RWPE1 (cell line): ENCODE measurements at regions of chr14 and their contacts with region 1.

Region 1: DNA sequence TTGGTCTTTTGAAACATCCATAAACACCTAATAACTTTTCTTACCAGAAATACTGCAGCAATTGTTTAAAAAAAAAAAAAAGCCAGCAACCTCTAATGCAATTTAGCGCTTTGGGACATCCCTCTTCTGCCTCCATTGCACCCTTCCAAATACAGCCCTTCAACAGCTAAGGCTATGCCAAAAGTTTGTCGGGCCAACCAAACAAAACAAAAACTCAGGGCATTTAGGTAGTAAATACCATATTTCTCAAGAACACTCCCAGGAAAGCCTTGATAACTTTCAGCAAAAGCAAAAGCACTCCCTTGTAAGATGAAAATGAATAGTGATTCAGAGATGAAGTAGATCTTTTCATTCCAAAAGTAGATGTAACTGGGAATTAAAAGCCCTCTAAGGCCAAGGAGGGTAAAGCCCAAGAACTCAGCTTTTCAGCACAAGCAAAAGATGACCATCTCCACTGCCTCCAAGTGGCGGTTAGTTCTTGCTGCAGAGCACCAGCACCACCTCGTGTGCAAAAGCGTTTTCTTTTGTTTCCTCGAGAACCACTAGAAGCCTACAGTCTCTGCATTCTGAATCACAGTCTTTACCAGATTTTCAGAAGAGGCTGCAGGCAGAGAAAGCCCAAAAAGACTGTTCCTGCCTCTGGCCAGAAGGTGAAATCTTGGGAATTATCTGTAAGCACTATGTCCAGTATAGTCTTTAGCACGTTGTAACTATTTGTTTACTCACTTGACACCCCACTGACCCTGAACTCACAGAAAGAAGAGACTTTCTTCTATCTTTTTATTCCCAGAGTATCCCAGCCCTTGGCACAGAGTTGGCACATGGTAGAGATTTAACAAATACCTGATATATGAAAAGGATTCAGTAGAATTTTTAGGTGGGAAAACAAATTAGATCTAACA is 53.1 kb downstream of the SIX6 start:
- DNase-seq: peak; percentile 46
- H3K27ac ChIP-seq: no peak overlapping the region
- CTCF ChIP-seq: peak; percentile 39

Region 2: DNA sequence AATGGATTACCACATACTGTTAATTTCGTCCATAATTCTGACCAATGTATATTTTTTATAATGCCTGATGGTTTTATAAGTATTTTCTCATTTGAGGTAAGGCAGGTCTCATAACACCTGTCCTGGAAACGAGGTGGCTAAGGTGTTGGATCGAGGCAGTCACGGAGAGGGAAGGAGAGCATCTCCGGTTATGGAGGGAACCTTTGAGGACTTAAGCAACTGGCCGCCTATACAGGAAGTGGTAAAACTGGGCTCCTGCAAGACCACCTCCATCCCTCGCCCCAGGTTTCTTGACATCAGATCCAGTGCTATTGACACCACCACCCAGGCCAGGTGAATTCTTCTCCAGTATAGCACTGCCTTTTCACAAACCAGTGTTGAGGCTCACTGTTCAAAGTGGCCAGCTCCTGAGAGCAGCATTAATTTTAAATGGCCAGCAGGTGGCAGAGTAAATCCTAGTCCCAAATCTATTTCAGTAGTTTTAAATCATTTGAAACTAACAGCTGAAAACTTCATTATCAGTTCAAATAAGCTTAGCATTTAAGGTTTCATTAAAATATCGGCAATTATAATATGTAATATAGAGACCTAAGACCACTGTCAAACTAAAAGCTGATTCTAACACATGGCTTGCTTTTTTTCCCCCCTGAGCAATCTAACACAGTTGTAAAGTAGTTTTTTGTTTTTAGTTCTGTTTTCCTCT is 212.3 kb before region 1 on chr14:
- CTCF ChIA-PET with region 1: interaction called, 19 read pairs
- POLR2A ChIA-PET with region 1: no interaction called
- DNase-seq: peak; percentile 62
- H3K27ac ChIP-seq: no peak overlapping the region
- CTCF ChIP-seq: peak; percentile 77

Region 3: DNA sequence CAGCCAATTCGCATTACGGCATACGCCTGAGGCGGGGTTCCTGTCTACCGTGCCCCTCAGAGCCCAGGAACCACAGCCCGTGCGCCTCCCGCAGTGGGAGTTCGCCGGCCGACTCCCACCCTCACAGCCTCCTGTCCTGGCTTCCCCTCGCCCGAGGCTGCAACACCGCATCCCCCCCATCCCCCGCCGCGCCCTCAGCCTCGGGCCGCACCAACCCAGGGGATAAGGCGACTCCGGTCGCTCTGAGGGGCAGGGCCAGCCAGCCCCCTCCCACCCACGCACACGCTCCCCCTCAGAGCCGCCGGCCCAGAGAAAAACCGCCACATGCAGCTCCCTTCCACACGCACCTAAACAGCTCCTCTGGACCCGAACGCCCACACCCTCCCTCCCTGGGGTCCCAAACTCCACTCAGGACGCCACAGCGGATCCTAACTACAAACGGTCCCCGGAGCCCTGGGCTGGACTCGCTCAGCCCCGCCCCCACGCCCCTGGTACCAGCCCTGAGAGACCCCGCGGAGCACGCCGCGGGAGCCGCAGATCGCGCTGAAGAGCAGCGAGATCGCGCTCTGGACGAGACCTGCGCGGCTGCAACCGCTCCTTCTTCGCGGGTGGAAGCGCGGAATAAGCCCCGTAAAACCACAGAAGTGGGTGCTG is 76.4 kb before region 1 on chr14 and contains the start of gene C14orf39:
- CTCF ChIA-PET with region 1: no interaction called
- POLR2A ChIA-PET with region 1: no interaction called
- DNase-seq: no peak
- H3K27ac ChIP-seq: no peak within 1 kb of the TSS
- CTCF ChIP-seq: no peak

Region 4: DNA sequence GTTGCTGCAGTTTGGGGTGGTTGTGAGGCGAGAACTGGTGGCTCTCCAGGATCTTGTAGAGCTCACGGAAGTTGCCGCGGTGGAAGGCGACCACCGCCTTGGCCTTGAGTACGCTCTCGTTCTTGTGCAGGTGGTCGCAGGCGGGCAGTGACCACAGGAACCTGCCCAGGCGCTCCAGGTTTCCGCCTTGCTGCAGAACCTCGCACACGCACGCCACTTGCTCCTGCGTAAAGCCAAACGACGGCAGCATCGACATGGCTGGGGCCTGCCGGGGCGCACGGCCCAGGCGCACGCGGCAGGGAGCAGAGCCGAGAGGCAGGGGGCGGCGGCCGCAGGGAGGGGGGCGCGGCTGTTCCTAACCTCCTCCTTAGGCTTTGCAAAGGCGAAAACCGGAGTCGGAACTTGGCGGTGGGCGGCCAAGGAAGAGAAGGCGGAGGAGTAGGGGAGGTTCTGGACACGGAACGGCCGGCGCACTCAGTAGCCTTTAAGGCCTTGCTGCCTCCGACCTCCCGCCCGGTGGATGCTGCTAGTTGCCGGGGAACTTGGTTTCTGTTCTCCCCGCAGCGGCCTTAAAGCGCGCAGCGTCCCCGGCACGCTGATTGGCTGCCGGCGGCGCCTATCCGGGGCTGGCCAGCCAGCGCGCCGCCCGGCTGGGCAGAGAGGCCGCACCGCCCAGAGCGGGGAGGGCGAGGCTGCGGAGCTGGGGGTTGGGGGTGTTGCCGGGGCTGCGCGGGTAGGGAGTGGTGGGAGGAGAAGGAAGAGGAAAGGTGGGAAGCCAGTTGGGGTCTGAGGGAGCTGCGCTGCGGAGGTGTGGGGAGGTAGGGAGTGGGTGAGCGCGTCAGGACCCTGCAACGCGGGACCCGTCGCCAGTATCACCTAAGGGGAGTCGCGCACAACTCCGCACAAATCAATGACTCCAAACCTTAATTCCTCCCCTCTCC is 87.1 kb after region 1 on chr14 and contains the start of gene SIX1:
- CTCF ChIA-PET with region 1: no interaction called
- POLR2A ChIA-PET with region 1: no interaction called
- DNase-seq: peak; percentile 94
- H3K27ac ChIP-seq: peak within 1 kb of the TSS; percentile 82
- CTCF ChIP-seq: no peak